Activated naive CD8-positive, alpha-beta T cell treated with anti-CD3 and anti-CD28 coated beads, Interleukin-2, amount 10 ng/mL, durations not matched to agents 7 days and 5 days (primary cell): ENCODE measurements at regions of chr22 and their contacts with region 1.

Region 1: GRCh38 chr22:36528795-36529751 is at the start of gene EIF3D:
- DNase-seq: peak; percentile 97
- ATAC-seq: peak; percentile 97
- H3K4me3 Mint-ChIP-seq: peak within 1 kb of the TSS; percentile 95
- H3K27ac Mint-ChIP-seq: peak within 1 kb of the TSS; percentile 100
- H3K4me1 Mint-ChIP-seq: peaks cover 15% of the 10 kb centered on the region
- H3K27me3 Mint-ChIP-seq: no peaks in the 10 kb centered on the region
- total RNA-seq, gene EIF3D: 198 to 203 TPM

Region 2: GRCh38 chr22:36454916-36455570 is 74.0 kb before region 1 on chr22:
- POLR2A ChIA-PET with region 1: no interaction called
- DNase-seq: peak; percentile 98
- ATAC-seq: peak; percentile 73
- H3K4me3 Mint-ChIP-seq: peak overlapping the region; percentile 56
- H3K27ac Mint-ChIP-seq: peak overlapping the region; percentile 83
- H3K4me1 Mint-ChIP-seq: peaks cover 49% of the 10 kb centered on the region
- H3K27me3 Mint-ChIP-seq: no peaks in the 10 kb centered on the region

Region 3: DNA sequence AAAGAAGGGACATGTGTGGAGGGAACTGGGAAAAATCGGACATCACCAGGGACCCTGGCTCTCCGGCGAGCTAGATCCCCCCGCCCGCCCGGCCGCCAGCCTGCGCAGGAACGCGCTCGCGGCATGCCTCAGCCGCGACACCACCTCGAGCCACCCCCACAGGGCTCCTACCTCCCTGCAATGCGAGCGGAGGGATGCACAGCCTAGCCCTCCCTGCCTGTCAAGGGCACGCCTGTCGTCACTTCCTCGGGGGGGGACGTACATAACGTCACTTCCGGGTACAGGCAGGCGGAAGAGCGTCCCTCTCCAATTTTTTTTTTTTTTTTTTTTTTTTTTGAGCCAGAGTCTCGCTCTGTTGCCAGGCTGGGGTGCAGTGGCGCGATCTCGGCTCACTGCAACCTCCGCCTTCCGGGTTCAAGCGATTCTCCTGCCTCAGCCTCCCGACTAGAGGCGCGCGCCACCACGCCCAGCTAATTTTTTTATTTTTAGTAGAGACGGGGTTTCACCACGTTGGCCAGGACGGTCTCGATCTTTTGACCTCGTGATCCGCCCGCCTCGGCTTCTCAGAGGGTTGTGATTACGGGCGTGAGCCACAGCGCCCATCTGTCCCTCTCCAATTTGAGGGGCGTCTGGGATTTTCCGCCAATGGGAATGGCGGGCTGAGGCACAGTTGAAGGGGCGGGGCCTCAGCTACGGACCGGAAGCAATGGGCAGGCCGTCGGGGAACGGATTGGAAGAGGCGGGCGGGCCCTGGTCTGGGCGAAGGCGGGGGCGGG is 47.5 kb before region 1 on chr22 and contains the start of gene TXN2:
- POLR2A ChIA-PET with region 1: interaction called, 10 read pairs
- DNase-seq: peak; percentile 95
- ATAC-seq: peak; percentile 90
- H3K4me3 Mint-ChIP-seq: peak within 1 kb of the TSS; percentile 99
- H3K27ac Mint-ChIP-seq: peak within 1 kb of the TSS; percentile 98
- H3K4me1 Mint-ChIP-seq: peaks cover 11% of the 10 kb centered on the region
- H3K27me3 Mint-ChIP-seq: no peaks in the 10 kb centered on the region
- total RNA-seq, gene TXN2: 64.5 to 64.6 TPM

Region 4: GRCh38 chr22:36506637-36507517 is 22.2 kb before region 1 on chr22 and contains the start of gene FOXRED2:
- POLR2A ChIA-PET with region 1: interaction called, 24 read pairs
- DNase-seq: peak; percentile 97
- ATAC-seq: peak; percentile 95
- H3K4me3 Mint-ChIP-seq: peak within 1 kb of the TSS; percentile 76
- H3K27ac Mint-ChIP-seq: peak within 1 kb of the TSS; percentile 70
- H3K4me1 Mint-ChIP-seq: peaks cover 14% of the 10 kb centered on the region
- H3K27me3 Mint-ChIP-seq: no peaks in the 10 kb centered on the region
- total RNA-seq, gene FOXRED2: 10.9 to 12.0 TPM

Region 5: GRCh38 chr22:36541831-36542411 is 12.8 kb after region 1 on chr22:
- POLR2A ChIA-PET with region 1: interaction called, 17 read pairs
- DNase-seq: no peak
- ATAC-seq: peak; percentile 91
- H3K4me3 Mint-ChIP-seq: peak overlapping the region; percentile 32
- H3K27ac Mint-ChIP-seq: peak overlapping the region; percentile 82
- H3K4me1 Mint-ChIP-seq: peaks cover 28% of the 10 kb centered on the region
- H3K27me3 Mint-ChIP-seq: peaks cover 5% of the 10 kb centered on the region